ENCODE measurements at regions of chr16 and their contacts with region 1.

Region 1: GRCh38 chr16:23556881-23557778 is at the starts of genes EARS2 and UBFD1:
- DNase-seq: peak; percentile 97
- CTCF ChIP-seq: peak; percentile 96

Region 2: DNA sequence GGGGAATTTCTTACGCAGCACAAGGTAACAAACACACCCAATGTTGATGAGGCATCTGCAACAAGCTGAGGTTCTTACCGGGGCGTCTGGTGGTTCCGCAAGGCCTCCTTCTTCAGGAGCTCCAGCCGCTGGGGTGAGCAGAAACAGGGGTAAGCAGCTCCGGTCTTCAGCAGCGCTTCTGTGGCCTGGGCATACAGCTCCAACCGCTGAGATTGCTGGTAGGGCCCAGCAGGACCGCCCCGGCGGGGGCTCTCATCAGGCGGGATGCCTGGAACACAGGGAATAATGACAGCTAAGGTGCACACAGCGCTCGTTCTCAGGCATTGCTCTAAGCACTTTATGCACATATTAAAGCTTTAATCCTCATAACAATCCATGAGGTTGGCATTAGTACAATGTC is 12.7 kb before region 1 on chr16:
- CTCF ChIA-PET with region 1: interaction called, 27 read pairs
- POLR2A ChIA-PET with region 1: interaction called, 4 read pairs
- DNase-seq: no peak
- CTCF ChIP-seq: no peak

Region 3: GRCh38 chr16:23570992-23571632 is 14.0 kb after region 1 on chr16:
- CTCF ChIA-PET with region 1: interaction called, 34 read pairs
- POLR2A ChIA-PET with region 1: interaction called, 3 read pairs
- DNase-seq: peak; percentile 42
- CTCF ChIP-seq: no peak

Measured in GM10248 (cell line).